Head of caudate nucleus (tissue), 42 donors: ENCODE measurements at regions of chr6 and their contacts with region 1.

Region 1: GRCh38 chr6:158072083-158072721 is 90.5 kb downstream of the SYNJ2 start:
- DNase-seq: peak; percentile 60 to 93 (median 84)

Region 2: DNA sequence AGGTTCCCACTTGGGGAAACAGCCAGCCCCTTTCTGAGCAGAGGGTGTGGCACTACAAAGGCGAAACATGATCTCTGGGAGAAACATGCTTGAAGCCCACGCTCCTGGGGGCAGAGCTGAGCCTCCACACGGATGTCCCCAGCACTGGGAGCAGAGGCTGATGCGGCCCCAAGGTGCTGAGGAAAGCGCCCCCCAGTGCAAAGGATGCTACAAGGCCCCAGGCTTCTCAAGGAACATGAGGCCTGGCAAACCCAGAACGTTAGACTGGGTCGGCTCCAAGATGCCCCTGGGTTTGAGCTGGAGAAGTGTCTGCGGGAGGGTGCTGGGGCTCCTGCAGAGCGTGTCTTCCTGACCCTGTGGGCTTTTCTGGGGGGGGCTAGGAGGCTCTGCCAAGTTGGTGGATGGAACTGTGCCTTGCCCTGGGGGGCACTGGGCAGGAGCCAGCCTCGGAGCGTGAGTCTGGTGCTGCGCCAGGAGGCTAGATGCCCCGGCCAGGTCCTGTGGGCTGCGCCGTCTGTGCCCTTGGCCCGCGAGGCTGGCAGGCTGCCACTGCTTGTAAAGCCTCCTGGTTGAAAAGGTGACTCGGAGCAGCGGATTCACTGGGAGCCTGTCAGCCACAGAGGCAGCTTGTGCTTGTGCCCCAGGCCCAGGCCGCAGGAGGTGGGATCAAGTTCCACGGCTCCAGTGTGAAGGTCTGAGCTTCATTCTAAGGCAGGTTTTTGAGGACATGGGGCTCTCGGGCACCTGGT is 82.5 kb before region 1 on chr6:
- intact Hi-C with region 1: loop called (anchors 5 kb)
- DNase-seq: peak in 29 of 42 donors; percentile 18 to 74 (median 56)

Region 3: GRCh38 chr6:158115508-158115907 is 43.3 kb after region 1 on chr6:
- intact Hi-C with region 1: no loop called
- DNase-seq: no peak

Region 4: GRCh38 chr6:158150701-158151100 is 78.5 kb after region 1 on chr6:
- intact Hi-C with region 1: no loop called
- DNase-seq: no peak